Endothelial cell of umbilical vein (primary cell): ENCODE measurements at regions of chr18 and their contacts with region 1.

Region 1: DNA sequence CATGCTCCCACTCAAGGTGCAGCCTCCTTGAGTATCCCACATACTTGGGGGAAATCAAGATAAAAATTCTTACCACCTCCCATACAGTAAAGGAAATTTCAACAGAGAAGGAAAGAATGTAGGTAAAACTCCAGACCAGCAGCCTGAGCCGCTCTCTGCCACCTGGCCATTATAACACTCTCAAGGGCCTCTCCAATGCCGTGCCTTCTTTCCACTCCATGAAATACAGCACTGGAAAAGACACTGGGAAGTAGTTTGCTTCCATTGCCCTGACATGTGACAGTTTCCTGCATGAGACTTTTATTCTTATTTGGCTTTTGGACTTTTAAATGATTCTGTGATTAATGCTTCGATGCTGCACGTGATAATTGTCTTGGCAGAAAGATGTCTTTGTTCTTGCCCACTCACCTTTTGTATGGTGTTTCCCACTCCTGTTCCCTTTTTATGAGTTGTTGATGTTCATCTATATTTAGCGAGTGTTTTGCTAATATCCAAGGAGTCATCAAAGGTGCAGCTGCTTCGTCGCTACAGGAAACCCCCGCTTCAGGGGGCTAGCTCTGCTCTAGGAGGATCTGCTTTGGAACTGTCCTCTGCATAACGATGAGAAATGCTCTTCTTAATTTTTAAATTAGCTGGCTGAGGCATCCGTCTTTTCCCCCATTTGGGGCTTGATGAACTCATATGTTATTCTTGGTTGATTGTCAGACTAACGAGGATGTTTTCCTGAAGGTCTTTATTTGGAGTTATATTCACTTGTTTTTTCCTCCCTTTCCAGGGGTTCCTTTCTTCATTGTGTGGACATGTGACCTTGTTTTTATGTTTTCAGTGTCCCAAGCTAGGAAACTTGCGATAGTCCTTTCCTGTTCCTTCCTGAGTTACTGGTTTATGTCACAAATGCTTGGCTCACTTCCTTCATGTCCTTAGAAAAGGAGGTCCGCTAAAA is 179.4 kb downstream of the TXNL1 start:
- DNase-seq: peak; percentile 95
- H3K4me3 ChIP-seq: no peak overlapping the region
- H3K27ac ChIP-seq: peak overlapping the region; percentile 65
- H3K4me1 ChIP-seq: peaks cover 28% of the 10 kb centered on the region
- H3K27me3 ChIP-seq: no peaks in the 10 kb centered on the region
- CTCF ChIP-seq: no peak
- POLR2A ChIP-seq: no peak

Region 2: DNA sequence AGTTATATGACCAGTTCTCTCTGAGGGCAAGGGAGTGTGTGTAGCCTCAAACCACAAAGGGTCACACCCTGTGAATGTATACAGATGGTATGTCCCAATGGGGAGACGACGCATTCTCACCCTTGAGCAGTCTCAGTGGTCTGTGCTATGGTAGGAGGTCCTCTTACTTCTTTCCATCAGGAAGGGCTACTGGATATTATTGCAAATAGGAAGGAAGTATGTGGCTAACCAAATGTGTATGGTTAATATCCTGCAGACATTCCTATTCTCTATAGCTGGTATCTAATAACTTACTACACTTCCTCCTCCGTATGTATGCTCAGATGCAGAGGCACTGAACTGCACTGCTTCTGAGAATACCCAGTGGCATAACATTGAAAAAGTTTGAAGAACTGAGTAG is 1193.1 kb before region 1 on chr18:
- CTCF ChIA-PET with region 1: no interaction called
- POLR2A ChIA-PET with region 1: no interaction called
- dilution Hi-C with region 1: no loop called
- intact Hi-C with region 1: loop called (anchors 5 kb)
- DNase-seq: peak; percentile 75
- H3K4me3 ChIP-seq: no peak overlapping the region
- H3K27ac ChIP-seq: peak overlapping the region; percentile 73
- H3K4me1 ChIP-seq: peaks cover 67% of the 10 kb centered on the region
- H3K27me3 ChIP-seq: no peaks in the 10 kb centered on the region
- CTCF ChIP-seq: no peak
- POLR2A ChIP-seq: peak; percentile 30

Region 3: GRCh38 chr18:55405893-55406406 is 1053.1 kb before region 1 on chr18:
- CTCF ChIA-PET with region 1: no interaction called
- POLR2A ChIA-PET with region 1: no interaction called
- dilution Hi-C with region 1: no loop called
- intact Hi-C with region 1: loop called (anchors 5 kb)
- DNase-seq: peak; percentile 97
- H3K4me3 ChIP-seq: no peak overlapping the region
- H3K27ac ChIP-seq: peak overlapping the region; percentile 73
- H3K4me1 ChIP-seq: peaks cover 48% of the 10 kb centered on the region
- H3K27me3 ChIP-seq: no peaks in the 10 kb centered on the region
- CTCF ChIP-seq: peak in 1 of 2 donors; percentile 20
- POLR2A ChIP-seq: no peak

Region 4: GRCh38 chr18:55988537-55988936 is 470.5 kb before region 1 on chr18:
- CTCF ChIA-PET with region 1: no interaction called
- POLR2A ChIA-PET with region 1: no interaction called
- dilution Hi-C with region 1: no loop called
- intact Hi-C with region 1: loop called (anchors 1 kb)
- DNase-seq: peak; percentile 94
- H3K4me3 ChIP-seq: no peak overlapping the region
- H3K27ac ChIP-seq: peak overlapping the region; percentile 81
- H3K4me1 ChIP-seq: peaks cover 10% of the 10 kb centered on the region
- H3K27me3 ChIP-seq: no peaks in the 10 kb centered on the region
- CTCF ChIP-seq: no peak
- POLR2A ChIP-seq: no peak

Region 5: GRCh38 chr18:56124186-56124585 is 334.9 kb before region 1 on chr18:
- CTCF ChIA-PET with region 1: no interaction called
- POLR2A ChIA-PET with region 1: no interaction called
- dilution Hi-C with region 1: no loop called
- intact Hi-C with region 1: loop called (anchors 1 kb)
- DNase-seq: peak; percentile 75
- H3K4me3 ChIP-seq: no peak overlapping the region
- H3K27ac ChIP-seq: no peak overlapping the region
- H3K4me1 ChIP-seq: peaks cover 6% of the 10 kb centered on the region
- H3K27me3 ChIP-seq: no peaks in the 10 kb centered on the region
- CTCF ChIP-seq: no peak
- POLR2A ChIP-seq: no peak

Region 6: DNA sequence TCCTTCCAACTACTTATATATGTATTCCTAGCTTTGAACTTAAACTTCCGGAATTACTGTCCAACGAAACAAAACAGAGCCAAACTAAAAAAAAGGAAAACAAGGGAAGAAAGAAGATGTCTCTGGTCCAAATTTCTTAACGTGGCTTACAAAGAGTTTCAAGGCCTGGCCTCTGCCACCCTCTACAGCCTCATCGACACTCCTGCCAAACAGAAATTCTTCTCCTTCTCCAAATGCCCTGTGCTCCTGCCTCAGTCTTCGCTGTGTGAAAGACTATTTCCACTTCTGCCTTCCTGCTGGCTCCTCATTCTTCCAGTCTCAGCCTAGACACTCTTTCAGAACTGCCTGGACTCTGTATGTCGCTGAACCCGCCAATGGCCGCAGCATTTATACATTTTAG is 69.9 kb before region 1 on chr18:
- CTCF ChIA-PET with region 1: no interaction called
- POLR2A ChIA-PET with region 1: no interaction called
- dilution Hi-C with region 1: no loop called
- intact Hi-C with region 1: loop called (anchors 1 kb)
- DNase-seq: no peak
- H3K4me3 ChIP-seq: no peak overlapping the region
- H3K27ac ChIP-seq: no peak overlapping the region
- H3K4me1 ChIP-seq: peaks cover 13% of the 10 kb centered on the region
- H3K27me3 ChIP-seq: no peaks in the 10 kb centered on the region
- CTCF ChIP-seq: no peak
- POLR2A ChIP-seq: no peak

Region 7: DNA sequence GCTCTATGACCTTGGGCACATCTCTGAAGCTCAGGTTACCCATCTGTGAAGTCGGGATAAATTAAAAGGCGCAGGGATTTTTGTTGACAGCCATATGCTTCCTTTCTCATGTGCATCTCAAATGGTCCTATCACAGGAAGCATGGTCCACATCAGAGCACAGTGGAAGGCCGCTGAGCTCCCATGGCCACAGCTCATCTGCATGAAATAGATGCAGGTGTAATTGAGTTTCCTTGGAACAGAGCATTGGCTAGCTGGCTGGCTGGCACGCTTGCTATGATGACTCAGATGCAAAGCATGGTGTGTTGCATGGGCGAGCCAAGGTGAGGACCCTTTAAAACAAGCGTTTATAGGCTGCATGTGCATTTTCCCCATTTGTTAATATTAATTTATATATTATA is 100.0 kb after region 1 on chr18:
- CTCF ChIA-PET with region 1: no interaction called
- POLR2A ChIA-PET with region 1: no interaction called
- dilution Hi-C with region 1: no loop called
- intact Hi-C with region 1: no loop called
- DNase-seq: no peak
- H3K4me3 ChIP-seq: no peak overlapping the region
- H3K27ac ChIP-seq: no peak overlapping the region
- H3K4me1 ChIP-seq: no peaks in the 10 kb centered on the region
- H3K27me3 ChIP-seq: no peaks in the 10 kb centered on the region
- CTCF ChIP-seq: no peak
- POLR2A ChIP-seq: no peak